Tibial artery (tissue), 4 donors: ENCODE measurements at regions of chr11 and their contacts with region 1.

Region 1: GRCh38 chr11:114439229-114440120 is at the start of gene REXO2:
- DNase-seq: peak; percentile 97
- H3K4me3 ChIP-seq: peak within 1 kb of the TSS; percentile 77 to 97
- H3K27ac ChIP-seq: peak within 1 kb of the TSS; percentile 81 to 88
- H3K4me1 ChIP-seq: peaks cover 0 to 47% (median 10%) of the 10 kb centered on the region in 4 donors
- H3K27me3 ChIP-seq: no peaks in the 10 kb centered on the region
- CTCF ChIP-seq: peak; percentile 19 to 27

Region 2: DNA sequence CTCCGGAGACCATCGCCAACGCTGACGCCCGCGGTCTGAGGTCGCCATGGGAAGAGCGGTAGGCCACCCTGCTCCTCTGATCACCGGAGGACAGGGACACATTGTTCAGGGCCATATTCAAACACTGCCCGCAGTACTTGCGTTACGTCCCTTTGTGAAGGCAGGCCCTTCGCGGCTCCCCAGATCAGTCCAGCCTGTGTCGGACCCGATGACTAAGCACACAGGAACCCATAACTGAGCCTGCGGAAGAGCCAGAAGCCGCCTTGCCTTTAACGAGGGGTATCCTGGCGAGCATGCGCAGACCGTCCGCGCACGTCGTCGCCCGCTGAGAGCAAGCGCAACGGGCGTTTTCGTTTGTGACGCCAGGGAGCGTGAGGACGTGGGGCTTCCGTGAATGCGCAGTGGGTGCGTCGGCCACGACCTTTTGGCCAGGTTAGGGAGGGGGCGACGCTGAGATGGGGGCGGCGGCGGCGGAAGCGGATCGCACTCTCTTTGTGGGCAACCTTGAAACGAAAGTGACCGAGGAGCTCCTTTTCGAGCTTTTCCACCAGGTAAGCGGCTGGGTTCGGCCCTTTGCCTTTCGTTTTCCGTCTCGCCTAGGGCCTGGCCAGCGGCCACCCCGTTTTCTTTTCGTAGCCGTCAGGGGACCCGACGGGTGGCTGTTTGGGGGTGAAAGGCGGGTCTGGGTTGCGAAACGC is 39.1 kb before region 1 on chr11 and contains the starts of genes C11orf71 and RBM7:
- intact Hi-C with region 1: loop called (anchors 5 kb)
- DNase-seq: peak; percentile 97 to 99
- H3K4me3 ChIP-seq: peak within 1 kb of the TSS; percentile 83 to 91
- H3K27ac ChIP-seq: peak within 1 kb of the TSS; percentile 98 to 99
- H3K4me1 ChIP-seq: peaks cover 0 to 51% (median 16%) of the 10 kb centered on the region in 4 donors
- H3K27me3 ChIP-seq: no peaks in the 10 kb centered on the region
- CTCF ChIP-seq: peak; percentile 4 to 10